ENCODE measurements at regions of chr1 and their contacts with region 1.

Region 1: GRCh38 chr1:200510228-200510623 is 100.4 kb upstream of the ZNF281 start:
- DNase-seq: peak; percentile 77
- ATAC-seq: peak; percentile 80
- H3K4me3 Mint-ChIP-seq: no peak overlapping the region
- H3K27ac Mint-ChIP-seq: no peak overlapping the region
- H3K4me1 Mint-ChIP-seq: no peaks in the 10 kb centered on the region
- H3K27me3 Mint-ChIP-seq: peaks cover 5% of the 10 kb centered on the region

Region 2: DNA sequence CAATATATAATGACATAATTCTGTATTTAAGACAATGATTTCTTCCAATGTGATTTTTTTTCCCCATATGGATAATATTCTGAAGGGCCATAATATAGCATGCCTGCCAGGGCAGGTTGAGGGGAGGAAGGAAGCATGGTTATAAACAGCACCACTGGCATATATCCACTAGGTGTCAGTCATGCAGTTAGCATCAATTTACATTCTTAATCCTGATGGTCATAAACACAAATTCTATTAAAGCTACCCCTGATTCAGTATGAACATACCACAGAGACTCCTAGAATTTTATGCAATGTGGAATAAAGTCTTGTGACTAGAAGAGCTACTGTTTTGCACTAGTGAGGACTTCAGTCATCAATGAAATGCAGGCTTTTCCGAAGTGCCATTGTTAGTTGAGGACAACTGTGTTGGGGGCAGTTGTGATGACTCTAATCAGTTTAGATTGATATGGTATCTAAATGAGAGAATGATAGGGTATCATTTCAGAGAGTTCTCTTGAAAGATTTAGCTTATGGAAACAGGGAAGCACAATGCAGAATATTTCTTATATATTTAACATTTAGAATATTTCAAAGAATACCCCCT is 825.4 kb before region 1 on chr1:
- CTCF ChIA-PET with region 1: interaction called, 8 read pairs
- POLR2A ChIA-PET with region 1: no interaction called
- intact Hi-C with region 1: loop called (anchors 1 kb)
- DNase-seq: peak; percentile 29
- ATAC-seq: peak; percentile 39
- H3K4me3 Mint-ChIP-seq: no peak overlapping the region
- H3K27ac Mint-ChIP-seq: no peak overlapping the region
- H3K4me1 Mint-ChIP-seq: no peaks in the 10 kb centered on the region
- H3K27me3 Mint-ChIP-seq: peaks cover 8% of the 10 kb centered on the region

Region 3: GRCh38 chr1:199843861-199844260 is 666.4 kb before region 1 on chr1:
- CTCF ChIA-PET with region 1: no interaction called
- POLR2A ChIA-PET with region 1: no interaction called
- intact Hi-C with region 1: no loop called
- DNase-seq: no peak
- ATAC-seq: no peak
- H3K4me3 Mint-ChIP-seq: no peak overlapping the region
- H3K27ac Mint-ChIP-seq: no peak overlapping the region
- H3K4me1 Mint-ChIP-seq: no peaks in the 10 kb centered on the region
- H3K27me3 Mint-ChIP-seq: peaks cover 11% of the 10 kb centered on the region

Region 4: GRCh38 chr1:199875856-199876255 is 634.4 kb before region 1 on chr1:
- CTCF ChIA-PET with region 1: no interaction called
- POLR2A ChIA-PET with region 1: interaction called, 10 read pairs
- intact Hi-C with region 1: no loop called
- DNase-seq: no peak
- ATAC-seq: no peak
- H3K4me3 Mint-ChIP-seq: no peak overlapping the region
- H3K27ac Mint-ChIP-seq: no peak overlapping the region
- H3K4me1 Mint-ChIP-seq: no peaks in the 10 kb centered on the region
- H3K27me3 Mint-ChIP-seq: peaks cover 10% of the 10 kb centered on the region

Region 5: DNA sequence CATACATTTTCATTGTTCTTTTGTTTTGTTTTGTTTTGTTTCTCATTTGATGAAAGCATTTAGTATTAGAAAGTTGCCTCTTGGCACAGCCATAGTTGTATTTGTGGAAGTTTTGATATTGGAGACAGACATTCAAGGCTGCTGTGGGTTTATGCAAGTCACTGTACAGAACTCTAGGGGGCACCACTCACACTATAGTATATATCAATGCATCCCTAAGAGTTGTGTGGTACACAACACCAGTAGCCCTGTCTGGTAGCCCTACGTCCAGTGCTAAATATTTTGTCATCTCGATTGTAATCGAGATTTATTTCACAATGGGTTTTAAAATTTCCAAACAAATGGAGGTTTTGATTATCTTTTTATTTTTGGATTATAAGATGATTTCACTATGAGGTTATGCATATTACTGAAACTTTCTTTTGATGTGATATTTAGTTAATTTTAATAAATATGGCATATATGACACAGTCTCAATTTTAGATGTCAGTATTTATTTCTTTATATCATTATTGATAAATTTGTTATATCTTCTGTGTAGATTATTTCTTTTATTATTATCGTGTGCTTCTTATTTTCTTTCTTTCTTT is 370.5 kb before region 1 on chr1:
- CTCF ChIA-PET with region 1: interaction called, 3 read pairs
- POLR2A ChIA-PET with region 1: no interaction called
- intact Hi-C with region 1: loop called (anchors 1 kb)
- DNase-seq: peak; percentile 39
- ATAC-seq: peak; percentile 88
- H3K4me3 Mint-ChIP-seq: no peak overlapping the region
- H3K27ac Mint-ChIP-seq: no peak overlapping the region
- H3K4me1 Mint-ChIP-seq: no peaks in the 10 kb centered on the region
- H3K27me3 Mint-ChIP-seq: no peaks in the 10 kb centered on the region

Region 6: DNA sequence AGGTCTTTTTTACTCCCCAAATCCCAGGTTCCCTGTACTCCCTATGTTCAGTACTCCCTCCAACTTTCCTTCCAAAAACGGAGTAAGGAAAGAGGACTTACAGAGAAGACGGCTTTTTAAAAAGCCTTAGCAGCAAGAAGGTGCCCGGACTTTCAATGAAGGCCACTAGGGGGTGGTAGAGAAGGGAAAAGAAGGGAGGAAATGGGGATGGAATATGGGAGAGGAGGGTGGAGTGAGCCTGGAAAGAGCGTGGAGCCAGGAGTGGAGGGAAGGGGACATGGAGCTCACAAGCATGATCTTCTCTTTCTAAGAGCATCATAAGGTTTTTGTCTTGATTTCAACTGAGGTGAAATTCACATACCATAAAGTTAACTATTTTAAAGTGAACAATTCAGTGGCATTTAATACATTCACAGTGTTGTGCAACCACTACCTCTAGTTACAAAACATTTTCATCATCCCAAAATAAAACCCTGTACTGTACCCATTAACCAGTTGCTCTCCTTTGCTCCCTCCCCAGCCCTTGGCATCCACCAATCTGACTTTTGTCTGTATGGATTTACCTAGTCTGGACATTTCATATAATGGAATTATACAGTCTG is 230.3 kb before region 1 on chr1:
- CTCF ChIA-PET with region 1: interaction called, 6 read pairs
- POLR2A ChIA-PET with region 1: no interaction called
- intact Hi-C with region 1: loop called in 1 of 2 experiments (anchors 1 kb)
- DNase-seq: peak; percentile 51
- ATAC-seq: no peak
- H3K4me3 Mint-ChIP-seq: no peak overlapping the region
- H3K27ac Mint-ChIP-seq: no peak overlapping the region
- H3K4me1 Mint-ChIP-seq: no peaks in the 10 kb centered on the region
- H3K27me3 Mint-ChIP-seq: no peaks in the 10 kb centered on the region

Region 7: DNA sequence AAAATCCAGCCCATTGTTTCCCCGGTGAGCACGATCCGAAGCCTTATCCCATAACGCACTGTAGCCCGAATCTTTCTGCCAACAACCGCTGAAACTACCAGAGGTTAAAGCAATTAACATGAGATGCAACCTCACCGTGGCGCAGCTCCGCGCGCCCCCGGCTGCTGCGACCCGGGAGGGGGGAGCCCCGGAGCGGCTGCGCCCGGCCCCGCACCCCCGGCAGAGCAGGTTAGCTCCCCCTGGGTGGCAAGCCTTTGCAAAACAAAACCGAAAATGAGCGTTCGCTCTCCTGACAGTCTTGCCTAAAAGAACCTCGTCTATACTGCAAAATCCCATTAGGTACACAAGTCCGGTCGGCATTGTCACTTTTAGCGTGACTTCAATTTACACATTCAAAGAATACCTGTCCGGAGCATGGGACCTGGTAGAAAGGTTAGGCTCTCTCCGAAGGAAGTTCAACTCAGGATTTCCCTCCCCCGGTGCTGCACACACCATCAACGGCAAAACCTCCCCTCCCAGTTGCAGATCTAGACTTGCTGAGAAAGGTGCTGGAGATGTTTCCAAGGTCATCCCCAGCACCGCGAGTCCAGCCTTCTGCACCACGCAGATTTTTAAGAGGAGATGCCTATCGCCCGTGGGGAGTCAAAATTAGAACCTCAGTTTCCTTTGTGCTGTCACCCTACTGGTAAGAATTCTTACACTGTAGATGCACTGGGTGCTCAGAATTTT is 207.9 kb before region 1 on chr1:
- CTCF ChIA-PET with region 1: interaction called, 5 read pairs
- POLR2A ChIA-PET with region 1: no interaction called
- intact Hi-C with region 1: loop called in 1 of 2 experiments (anchors 5 kb)
- DNase-seq: peak; percentile 77
- ATAC-seq: peak; percentile 93
- H3K4me3 Mint-ChIP-seq: peak overlapping the region; percentile 73
- H3K27ac Mint-ChIP-seq: no peak overlapping the region
- H3K4me1 Mint-ChIP-seq: peaks cover 12% of the 10 kb centered on the region
- H3K27me3 Mint-ChIP-seq: no peaks in the 10 kb centered on the region

Region 8: GRCh38 chr1:200526709-200527612 is 16.7 kb after region 1 on chr1:
- CTCF ChIA-PET with region 1: interaction called, 15 read pairs
- POLR2A ChIA-PET with region 1: interaction called, 3 read pairs
- intact Hi-C with region 1: no loop called
- DNase-seq: no peak
- ATAC-seq: no peak
- H3K4me3 Mint-ChIP-seq: no peak overlapping the region
- H3K27ac Mint-ChIP-seq: no peak overlapping the region
- H3K4me1 Mint-ChIP-seq: peaks cover 26% of the 10 kb centered on the region
- H3K27me3 Mint-ChIP-seq: no peaks in the 10 kb centered on the region